ENCODE measurements at regions of chr5 and their contacts with region 1.

Region 1: GRCh38 chr5:67693956-67694809 is 497.6 kb upstream of the CD180 start:
- DNase-seq: peak; percentile 94 to 98
- ATAC-seq: peak; percentile 95
- H3K4me3 ChIP-seq: peak overlapping the region in 1 of 4 donors; percentile 22
- H3K27ac ChIP-seq: peak overlapping the region; percentile 88 to 93 (median 90)
- H3K4me1 ChIP-seq: peaks cover 29 to 30% of the 10 kb centered on the region in 2 donors
- H3K27me3 ChIP-seq: no peaks in the 10 kb centered on the region
- CTCF ChIP-seq: peak in 1 of 5 experiments; percentile 18
- POLR2A ChIP-seq: peak; percentile 52 to 84

Region 2: GRCh38 chr5:67120032-67120431 is 574.2 kb before region 1 on chr5:
- in situ Hi-C with region 1: no loop called
- intact Hi-C with region 1: no loop called
- DNase-seq: no peak
- ATAC-seq: no peak
- H3K4me3 ChIP-seq: no peak overlapping the region
- H3K27ac ChIP-seq: no peak overlapping the region
- H3K4me1 ChIP-seq: no peaks in the 10 kb centered on the region
- H3K27me3 ChIP-seq: no peaks in the 10 kb centered on the region
- CTCF ChIP-seq: no peak
- POLR2A ChIP-seq: no peak

Region 3: GRCh38 chr5:67677422-67677970 is 16.7 kb before region 1 on chr5:
- in situ Hi-C with region 1: no loop called
- intact Hi-C with region 1: loop called (anchors 1 kb)
- DNase-seq: peak; percentile 92 to 96
- ATAC-seq: peak; percentile 97 to 99
- H3K4me3 ChIP-seq: no peak overlapping the region
- H3K27ac ChIP-seq: peak overlapping the region; percentile 81 to 82 (median 81)
- H3K4me1 ChIP-seq: peaks cover 20 to 26% of the 10 kb centered on the region in 2 donors
- H3K27me3 ChIP-seq: no peaks in the 10 kb centered on the region
- CTCF ChIP-seq: no peak
- POLR2A ChIP-seq: peak in 1 of 2 donors; percentile 30

Region 4: DNA sequence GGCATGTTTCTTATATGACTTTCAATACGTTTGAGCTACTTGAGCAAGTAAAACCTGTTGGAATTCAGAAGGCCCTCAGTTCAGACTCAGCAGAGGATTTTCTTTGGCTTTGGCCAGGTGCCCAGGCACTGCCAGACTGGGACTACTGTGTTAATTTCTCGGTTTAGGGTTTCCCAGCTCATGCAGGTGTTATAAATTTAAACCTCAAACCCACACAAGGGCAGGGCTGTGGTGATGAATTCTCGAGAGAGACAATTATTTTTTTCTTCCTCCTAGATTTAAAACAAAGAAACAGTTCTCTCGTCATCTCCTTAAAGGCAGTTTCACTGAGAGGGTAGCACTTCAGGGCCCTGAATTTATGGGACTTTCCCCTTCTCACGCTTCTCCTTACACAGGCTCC is 115.4 kb after region 1 on chr5:
- in situ Hi-C with region 1: loop called in 2 of 4 experiments (anchors 5 kb)
- intact Hi-C with region 1: loop called (anchors 1 kb)
- DNase-seq: no peak
- ATAC-seq: no peak
- H3K4me3 ChIP-seq: no peak overlapping the region
- H3K27ac ChIP-seq: peak overlapping the region; percentile 91 to 95 (median 92)
- H3K4me1 ChIP-seq: peaks cover 39 to 44% of the 10 kb centered on the region in 2 donors
- H3K27me3 ChIP-seq: no peaks in the 10 kb centered on the region
- CTCF ChIP-seq: no peak
- POLR2A ChIP-seq: no peak

Region 5: DNA sequence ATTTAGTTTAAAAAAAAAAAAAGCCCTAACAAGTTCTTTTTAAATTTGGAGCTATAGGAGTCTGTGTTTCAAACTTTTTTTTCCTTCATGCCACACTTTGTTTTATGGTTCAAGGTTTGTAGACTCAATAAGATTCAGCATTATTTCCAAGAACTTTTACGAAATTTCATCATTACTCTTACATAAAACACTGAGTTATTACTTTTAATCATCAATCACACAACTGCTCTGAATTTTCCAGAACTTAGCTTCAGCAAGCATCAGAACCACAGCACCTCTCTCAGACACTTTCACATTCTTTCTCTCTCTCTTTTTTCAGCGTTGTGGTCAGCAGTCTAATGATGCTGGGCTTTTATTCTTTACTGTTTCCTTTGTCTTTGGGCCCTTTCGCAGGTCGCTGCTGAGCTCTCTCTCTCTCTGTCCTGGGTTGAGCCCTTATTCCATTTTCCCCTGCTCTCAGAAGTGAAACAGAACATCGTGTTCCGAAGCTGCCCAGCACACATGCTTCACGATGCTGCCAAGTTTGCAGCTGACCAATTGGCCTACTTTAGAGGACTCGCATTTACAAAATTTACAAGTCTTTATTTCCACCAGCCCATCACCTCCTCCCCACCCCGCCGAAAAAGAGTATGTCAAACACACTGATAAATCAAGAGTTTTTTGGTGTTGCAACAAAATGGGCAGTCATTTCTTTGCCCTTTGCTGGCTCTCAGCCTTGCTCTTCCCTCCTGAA is 476.8 kb after region 1 on chr5:
- in situ Hi-C with region 1: no loop called
- intact Hi-C with region 1: loop called (anchors 2 kb)
- DNase-seq: peak; percentile 82 to 93
- ATAC-seq: peak; percentile 99 to 100
- H3K4me3 ChIP-seq: peak overlapping the region; percentile 18 to 31 (median 26)
- H3K27ac ChIP-seq: peak overlapping the region; percentile 73 to 86 (median 85)
- H3K4me1 ChIP-seq: peaks cover 27 to 31% of the 10 kb centered on the region in 2 donors
- H3K27me3 ChIP-seq: no peaks in the 10 kb centered on the region
- CTCF ChIP-seq: no peak
- POLR2A ChIP-seq: peak in 1 of 2 donors; percentile 30